ENCODE measurements at regions of chr10 and their contacts with region 1.

Region 1: DNA sequence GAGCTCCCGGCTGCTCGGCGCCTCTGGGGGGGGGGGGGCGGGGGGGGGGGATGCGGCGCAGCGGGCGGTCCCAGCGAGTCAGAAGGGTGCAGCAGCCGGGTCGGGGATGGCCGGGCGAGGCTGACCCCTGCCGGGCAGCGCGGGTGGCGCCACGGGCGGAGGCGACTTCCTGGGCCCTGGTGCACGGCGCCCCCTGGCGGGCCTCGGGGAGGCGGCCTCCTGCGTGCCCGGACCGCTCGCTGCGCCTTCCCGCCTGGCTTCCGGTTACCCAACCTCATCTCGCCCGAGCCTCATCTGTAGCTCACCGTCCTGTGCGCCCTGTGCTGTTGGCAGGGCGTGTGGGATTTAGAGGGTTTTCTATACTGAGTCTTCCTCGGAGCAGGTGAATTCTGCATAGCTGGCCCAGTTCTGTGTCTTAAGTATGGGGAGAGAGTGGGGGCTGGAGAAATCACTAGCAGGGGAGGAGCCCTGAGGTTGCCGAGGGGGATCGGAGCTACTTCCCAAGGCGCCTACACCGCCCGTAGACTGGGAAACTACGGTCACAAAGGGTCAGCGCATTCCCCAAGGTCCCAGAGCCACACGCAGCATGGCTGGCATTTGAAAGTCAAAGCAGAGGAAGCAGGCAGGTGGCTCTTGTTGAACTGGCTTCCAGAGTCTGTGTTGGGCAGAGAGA is 28.3 kb upstream of the WDFY4 start:
- DNase-seq: peak; percentile 99
- ATAC-seq: peak; percentile 93
- H3K4me3 Mint-ChIP-seq: peak overlapping the region; percentile 81
- H3K27ac Mint-ChIP-seq: no peak overlapping the region
- H3K4me1 Mint-ChIP-seq: peaks cover 48% of the 10 kb centered on the region
- H3K27me3 Mint-ChIP-seq: peaks cover 6% of the 10 kb centered on the region
- CTCF ChIP-seq: peak; percentile 97

Region 2: GRCh38 chr10:48444266-48444665 is 212.1 kb before region 1 on chr10:
- CTCF ChIA-PET with region 1: interaction called, 4 read pairs
- POLR2A ChIA-PET with region 1: no interaction called
- intact Hi-C with region 1: loop called (anchors 1 kb)
- DNase-seq: no peak
- ATAC-seq: no peak
- H3K4me3 Mint-ChIP-seq: no peak overlapping the region
- H3K27ac Mint-ChIP-seq: no peak overlapping the region
- H3K4me1 Mint-ChIP-seq: no peaks in the 10 kb centered on the region
- H3K27me3 Mint-ChIP-seq: peaks cover 4% of the 10 kb centered on the region
- CTCF ChIP-seq: no peak

Region 3: GRCh38 chr10:48614481-48615390 is 41.6 kb before region 1 on chr10:
- CTCF ChIA-PET with region 1: interaction called, 173 read pairs
- POLR2A ChIA-PET with region 1: interaction called, 3 read pairs
- intact Hi-C with region 1: no loop called
- DNase-seq: no peak
- ATAC-seq: peak; percentile 52
- H3K4me3 Mint-ChIP-seq: no peak overlapping the region
- H3K27ac Mint-ChIP-seq: no peak overlapping the region
- H3K4me1 Mint-ChIP-seq: peaks cover 17% of the 10 kb centered on the region
- H3K27me3 Mint-ChIP-seq: peaks cover 17% of the 10 kb centered on the region
- CTCF ChIP-seq: no peak

Region 4: GRCh38 chr10:48694371-48695030 is 38.1 kb after region 1 on chr10:
- CTCF ChIA-PET with region 1: interaction called, 228 read pairs
- POLR2A ChIA-PET with region 1: interaction called, 6 read pairs
- intact Hi-C with region 1: no loop called
- DNase-seq: no peak
- ATAC-seq: no peak
- H3K4me3 Mint-ChIP-seq: peak overlapping the region; percentile 41
- H3K27ac Mint-ChIP-seq: peak overlapping the region; percentile 68
- H3K4me1 Mint-ChIP-seq: peaks cover 99% of the 10 kb centered on the region
- H3K27me3 Mint-ChIP-seq: no peaks in the 10 kb centered on the region
- CTCF ChIP-seq: no peak

Region 5: GRCh38 chr10:48736596-48736995 is 80.2 kb after region 1 on chr10:
- CTCF ChIA-PET with region 1: interaction called, 15 read pairs
- POLR2A ChIA-PET with region 1: no interaction called
- intact Hi-C with region 1: no loop called
- DNase-seq: no peak
- ATAC-seq: no peak
- H3K4me3 Mint-ChIP-seq: no peak overlapping the region
- H3K27ac Mint-ChIP-seq: peak overlapping the region; percentile 24
- H3K4me1 Mint-ChIP-seq: no peaks in the 10 kb centered on the region
- H3K27me3 Mint-ChIP-seq: no peaks in the 10 kb centered on the region
- CTCF ChIP-seq: no peak

Region 6: GRCh38 chr10:48833674-48834073 is 177.3 kb after region 1 on chr10:
- CTCF ChIA-PET with region 1: interaction called, 12 read pairs
- POLR2A ChIA-PET with region 1: interaction called, 3 read pairs
- intact Hi-C with region 1: no loop called
- DNase-seq: no peak
- ATAC-seq: no peak
- H3K4me3 Mint-ChIP-seq: no peak overlapping the region
- H3K27ac Mint-ChIP-seq: no peak overlapping the region
- H3K4me1 Mint-ChIP-seq: no peaks in the 10 kb centered on the region
- H3K27me3 Mint-ChIP-seq: no peaks in the 10 kb centered on the region
- CTCF ChIP-seq: no peak